HEK293 (cell line): ENCODE measurements at regions of chr5 and their contacts with region 1.

Region 1: DNA sequence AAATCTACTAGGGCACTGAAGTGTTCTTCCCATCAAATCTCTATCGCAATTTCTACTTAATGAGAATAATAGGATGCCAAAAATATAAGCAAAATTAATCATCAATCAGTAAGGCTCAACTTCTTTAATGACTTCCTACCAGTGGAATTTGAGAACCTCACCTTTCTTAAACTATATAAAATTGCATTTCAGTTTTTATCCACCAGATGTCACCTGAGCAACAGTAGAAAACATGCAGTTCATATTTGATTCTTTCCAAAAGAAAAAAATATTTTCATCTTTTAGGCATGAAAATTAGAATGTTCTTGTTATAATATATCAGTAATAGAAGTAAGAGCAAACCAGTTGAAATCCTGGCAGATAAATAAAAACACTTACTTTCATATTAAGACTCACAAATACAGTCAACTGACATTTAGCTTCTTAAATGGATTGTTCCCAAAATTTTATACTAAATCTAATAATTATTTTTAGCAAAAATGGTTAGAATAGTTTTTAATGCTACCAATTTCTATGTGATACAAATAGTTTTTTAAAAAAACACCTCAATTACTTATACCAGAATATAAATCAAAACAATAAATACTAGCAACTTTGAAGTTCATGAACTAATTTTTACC is 13.4 kb upstream of the CCDC112 start:
- H3K4me3 ChIP-seq: no peak overlapping the region
- H3K27ac ChIP-seq: no peak overlapping the region
- H3K4me1 ChIP-seq: no peaks in the 10 kb centered on the region
- CTCF ChIP-seq: no peak

Region 2: GRCh38 chr5:115069087-115069968 is 240.5 kb before region 1 on chr5:
- CTCF ChIA-PET with region 1: no interaction called
- POLR2A ChIA-PET with region 1: no interaction called
- H3K4me3 ChIP-seq: no peak overlapping the region
- H3K27ac ChIP-seq: no peak overlapping the region
- H3K4me1 ChIP-seq: no peaks in the 10 kb centered on the region
- CTCF ChIP-seq: peak; percentile 55

Region 3: GRCh38 chr5:115296124-115297022 is 13.5 kb before region 1 on chr5 and contains the start of gene CCDC112:
- CTCF ChIA-PET with region 1: interaction called, 13 read pairs
- POLR2A ChIA-PET with region 1: interaction called, 3 read pairs
- H3K4me3 ChIP-seq: peak within 1 kb of the TSS; percentile 83
- H3K27ac ChIP-seq: peak within 1 kb of the TSS; percentile 65; the same call in 1 of the 2 replicates
- H3K4me1 ChIP-seq: no peaks in the 10 kb centered on the region
- CTCF ChIP-seq: peak; percentile 74

Region 4: DNA sequence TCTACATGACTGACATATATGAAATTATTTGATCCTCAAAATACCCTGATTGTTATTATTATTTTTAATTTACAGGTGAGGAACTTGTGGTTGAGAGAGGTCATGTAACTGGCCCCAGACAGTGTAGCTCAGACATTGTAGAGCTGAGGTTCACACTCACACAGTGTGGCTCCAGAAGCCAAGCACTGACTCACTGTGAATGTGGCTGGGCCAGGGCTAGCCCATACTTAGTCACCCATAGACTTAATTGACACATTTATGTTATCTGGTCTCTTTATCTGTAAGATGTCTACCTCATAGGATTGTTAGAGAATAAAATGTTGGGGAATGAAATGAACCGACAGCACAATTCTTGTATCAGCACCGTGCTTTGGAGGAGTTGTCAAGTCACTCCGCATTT is 11.4 kb after region 1 on chr5:
- CTCF ChIA-PET with region 1: interaction called, 13 read pairs
- POLR2A ChIA-PET with region 1: no interaction called
- H3K4me3 ChIP-seq: no peak overlapping the region
- H3K27ac ChIP-seq: no peak overlapping the region
- H3K4me1 ChIP-seq: no peaks in the 10 kb centered on the region
- CTCF ChIP-seq: no peak

Region 5: DNA sequence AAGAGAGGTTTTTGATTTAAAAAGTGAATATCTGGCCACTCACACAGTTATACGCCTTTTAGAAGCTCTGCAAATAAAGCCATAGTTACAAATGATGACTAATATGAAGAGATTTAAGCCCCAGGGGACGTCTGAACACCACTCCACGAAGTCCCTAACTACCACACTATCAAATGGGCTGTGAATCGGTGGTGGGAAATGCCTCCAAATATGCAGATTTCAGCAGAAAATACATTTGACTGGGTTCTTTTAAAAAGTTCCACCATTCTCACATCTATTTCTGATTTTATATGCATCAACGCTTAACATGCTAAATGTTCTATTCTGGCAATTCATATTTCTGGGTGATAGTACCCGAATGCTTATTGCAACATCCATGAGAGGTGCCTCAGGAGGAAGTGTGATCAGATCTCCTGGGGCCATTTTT is 269.9 kb after region 1 on chr5:
- CTCF ChIA-PET with region 1: interaction called, 151 read pairs
- POLR2A ChIA-PET with region 1: no interaction called
- H3K4me3 ChIP-seq: no peak overlapping the region
- H3K27ac ChIP-seq: no peak overlapping the region
- H3K4me1 ChIP-seq: no peaks in the 10 kb centered on the region
- CTCF ChIP-seq: no peak

Region 6: DNA sequence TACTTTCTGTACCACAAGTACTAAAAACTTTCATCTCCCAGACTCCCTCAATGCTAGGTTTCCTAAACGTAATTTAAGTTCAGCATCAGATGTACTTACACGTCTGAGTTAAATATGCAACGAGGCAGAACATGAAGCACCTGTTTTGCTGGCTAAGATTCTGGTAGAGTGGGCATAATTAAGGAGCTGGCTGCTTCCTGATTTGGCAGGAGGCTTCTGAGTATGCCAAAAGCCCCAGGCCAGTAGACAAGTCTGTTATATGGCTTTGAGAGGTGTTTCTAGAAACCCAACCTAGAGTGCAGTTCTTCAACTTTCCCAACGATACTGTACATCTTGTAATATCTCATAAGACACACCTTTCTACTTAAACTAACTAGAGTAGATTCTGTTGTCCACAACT is 278.8 kb after region 1 on chr5:
- CTCF ChIA-PET with region 1: interaction called, 23 read pairs
- POLR2A ChIA-PET with region 1: no interaction called
- H3K4me3 ChIP-seq: no peak overlapping the region
- H3K27ac ChIP-seq: no peak overlapping the region
- H3K4me1 ChIP-seq: no peaks in the 10 kb centered on the region
- CTCF ChIP-seq: no peak